ENCODE measurements at regions of chr3 and their contacts with region 1.

Region 1: GRCh38 chr3:30667280-30667651 is 60.9 kb downstream of the TGFBR2 start:
- DNase-seq: peak in 2 of 9 experiments; percentile 48 to 76
- ATAC-seq: peak; percentile 39
- H3K4me3 ChIP-seq: no peak overlapping the region
- H3K4me3 Mint-ChIP-seq: peak overlapping the region; percentile 45
- H3K27ac ChIP-seq: peak overlapping the region in 1 of 2 experiments; percentile 61
- H3K27ac Mint-ChIP-seq: peak overlapping the region; percentile 91
- H3K4me1 ChIP-seq: peaks cover 98% of the 10 kb centered on the region
- H3K4me1 Mint-ChIP-seq: peaks cover 96% of the 10 kb centered on the region
- H3K27me3 ChIP-seq: no peaks in the 10 kb centered on the region
- H3K27me3 Mint-ChIP-seq: no peaks in the 10 kb centered on the region
- CTCF ChIP-seq: no peak

Region 2: GRCh38 chr3:30437171-30437601 is 230.1 kb before region 1 on chr3:
- CTCF ChIA-PET with region 1: no interaction called
- POLR2A ChIA-PET with region 1: no interaction called
- intact Hi-C with region 1: no loop called
- DNase-seq: no peak
- ATAC-seq: no peak
- H3K4me3 ChIP-seq: no peak overlapping the region
- H3K4me3 Mint-ChIP-seq: no peak overlapping the region
- H3K27ac ChIP-seq: no peak overlapping the region
- H3K27ac Mint-ChIP-seq: no peak overlapping the region
- H3K4me1 ChIP-seq: peaks cover 22% of the 10 kb centered on the region
- H3K4me1 Mint-ChIP-seq: peaks cover 31% of the 10 kb centered on the region
- H3K27me3 ChIP-seq: no peaks in the 10 kb centered on the region
- H3K27me3 Mint-ChIP-seq: no peaks in the 10 kb centered on the region
- CTCF ChIP-seq: no peak

Region 3: DNA sequence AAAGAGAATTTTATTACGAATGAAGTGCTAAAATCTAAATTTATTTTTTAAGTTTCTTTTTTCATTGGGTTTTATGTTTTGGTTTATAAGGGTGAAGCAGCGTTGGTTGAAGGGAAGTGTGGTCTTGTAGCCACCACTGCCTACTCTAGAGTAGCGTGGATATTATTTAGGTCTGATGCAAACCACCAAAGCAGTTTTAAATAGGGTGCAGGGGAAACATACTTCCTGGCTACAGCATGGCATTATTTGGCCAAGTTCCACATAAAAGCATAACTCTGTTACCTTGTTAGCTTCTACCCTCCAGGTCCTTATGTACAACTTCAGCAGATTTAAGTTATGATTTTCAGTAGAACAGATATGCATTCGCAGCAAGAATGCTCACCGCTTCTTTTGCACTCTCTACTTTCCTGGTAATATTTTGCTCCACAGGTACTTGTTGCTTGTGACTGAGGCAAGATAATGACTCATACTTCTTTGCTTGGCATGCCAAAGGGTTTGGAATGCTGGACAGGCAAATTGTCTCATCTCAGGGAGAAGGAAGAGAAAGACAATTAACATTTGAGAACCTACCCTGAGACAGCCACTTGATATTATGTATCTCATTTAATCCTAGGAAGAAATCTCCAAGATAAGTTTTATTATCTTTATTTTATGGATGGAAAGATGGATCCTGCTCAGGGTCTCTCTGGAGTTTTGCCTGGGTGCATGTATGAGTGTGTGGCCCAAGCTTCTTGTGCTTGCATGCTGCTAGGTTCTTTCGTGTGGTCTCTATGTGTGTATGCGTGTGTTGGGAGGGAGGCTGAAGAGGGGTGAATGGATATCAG is 55.4 kb before region 1 on chr3:
- CTCF ChIA-PET with region 1: interaction called, 14 read pairs
- POLR2A ChIA-PET with region 1: interaction called, 13 read pairs
- intact Hi-C with region 1: loop called in 1 of 2 experiments (anchors 2 kb)
- DNase-seq: peak in 2 of 9 experiments; percentile 53 to 69
- ATAC-seq: peak; percentile 29
- H3K4me3 ChIP-seq: peak overlapping the region; percentile 89 to 94
- H3K4me3 Mint-ChIP-seq: peak overlapping the region; percentile 94
- H3K27ac ChIP-seq: peak overlapping the region; percentile 63 to 74
- H3K27ac Mint-ChIP-seq: peak overlapping the region; percentile 98
- H3K4me1 ChIP-seq: peaks cover 54% of the 10 kb centered on the region
- H3K4me1 Mint-ChIP-seq: peaks cover 68% of the 10 kb centered on the region
- H3K27me3 ChIP-seq: no peaks in the 10 kb centered on the region
- H3K27me3 Mint-ChIP-seq: no peaks in the 10 kb centered on the region
- CTCF ChIP-seq: no peak

Region 4: DNA sequence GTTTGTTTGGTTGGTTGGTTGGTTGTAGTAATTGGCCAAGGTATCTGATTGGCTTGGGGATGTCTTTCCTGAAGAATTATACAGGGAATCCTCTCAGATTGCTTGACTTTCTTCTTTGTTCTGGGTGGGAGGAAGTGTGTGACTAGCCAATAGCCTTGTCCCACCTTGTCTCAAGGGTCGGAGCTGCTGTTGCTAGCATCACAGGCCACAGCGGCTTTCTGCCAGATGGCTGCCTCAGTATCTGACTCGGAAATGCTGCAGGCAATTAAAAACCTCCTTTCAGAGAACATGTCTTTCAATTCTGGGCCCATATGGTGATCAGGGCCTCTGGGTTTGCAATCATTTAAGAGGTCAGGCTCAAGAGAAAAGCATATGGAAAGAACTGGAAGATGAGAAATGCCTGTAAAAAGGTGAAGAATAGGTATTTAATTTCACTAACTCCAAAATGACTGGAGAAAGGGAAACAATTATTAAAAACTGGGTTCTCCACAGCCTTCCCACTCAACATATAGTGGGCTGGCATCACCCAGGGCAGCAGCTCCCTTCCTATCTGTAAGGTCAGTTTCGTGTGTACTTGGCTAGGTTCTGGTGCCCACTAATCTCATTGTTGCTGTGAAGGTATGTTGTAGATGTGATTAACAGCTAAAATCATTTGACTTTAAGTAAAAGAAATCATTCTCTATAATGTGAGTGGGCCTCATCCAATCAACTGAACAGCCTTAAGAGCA is 28.4 kb before region 1 on chr3:
- CTCF ChIA-PET with region 1: interaction called, 4 read pairs
- POLR2A ChIA-PET with region 1: interaction called, 11 read pairs
- intact Hi-C with region 1: loop called in 1 of 2 experiments (anchors 5 kb)
- DNase-seq: no peak
- ATAC-seq: no peak
- H3K4me3 ChIP-seq: peak overlapping the region in 1 of 2 experiments; percentile 25
- H3K4me3 Mint-ChIP-seq: peak overlapping the region; percentile 55
- H3K27ac ChIP-seq: peak overlapping the region in 1 of 2 experiments; percentile 77
- H3K27ac Mint-ChIP-seq: peak overlapping the region; percentile 94
- H3K4me1 ChIP-seq: peaks cover 100% of the 10 kb centered on the region
- H3K4me1 Mint-ChIP-seq: peaks cover 97% of the 10 kb centered on the region
- H3K27me3 ChIP-seq: no peaks in the 10 kb centered on the region
- H3K27me3 Mint-ChIP-seq: no peaks in the 10 kb centered on the region
- CTCF ChIP-seq: no peak

Region 5: GRCh38 chr3:30681643-30682211 is 14.5 kb after region 1 on chr3:
- CTCF ChIA-PET with region 1: interaction called, 15 read pairs
- POLR2A ChIA-PET with region 1: interaction called, 19 read pairs
- intact Hi-C with region 1: loop called in 1 of 2 experiments (anchors 2 kb)
- DNase-seq: peak in 1 of 9 experiments; percentile 46
- ATAC-seq: peak; percentile 41
- H3K4me3 ChIP-seq: no peak overlapping the region
- H3K4me3 Mint-ChIP-seq: peak overlapping the region; percentile 23
- H3K27ac ChIP-seq: peak overlapping the region in 1 of 2 experiments; percentile 32
- H3K27ac Mint-ChIP-seq: peak overlapping the region; percentile 92
- H3K4me1 ChIP-seq: peaks cover 87% of the 10 kb centered on the region
- H3K4me1 Mint-ChIP-seq: peaks cover 95% of the 10 kb centered on the region
- H3K27me3 ChIP-seq: no peaks in the 10 kb centered on the region
- H3K27me3 Mint-ChIP-seq: no peaks in the 10 kb centered on the region
- CTCF ChIP-seq: no peak

Region 6: DNA sequence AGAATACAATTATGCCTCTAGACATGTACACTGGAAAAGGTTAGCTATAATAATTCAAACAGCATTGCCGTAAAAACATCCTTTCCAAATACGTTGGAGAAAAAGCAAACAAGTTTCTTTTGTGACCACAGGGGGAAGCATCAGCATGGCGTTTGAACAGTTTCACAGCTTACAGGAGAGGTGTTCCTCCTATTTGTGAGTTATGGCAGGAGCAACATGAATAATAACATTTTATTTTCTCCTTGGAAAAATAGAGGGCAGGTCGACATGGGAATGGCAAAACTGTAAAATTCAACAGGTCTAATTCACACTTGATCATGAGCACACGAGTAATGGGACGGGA is 266.9 kb after region 1 on chr3:
- CTCF ChIA-PET with region 1: no interaction called
- POLR2A ChIA-PET with region 1: no interaction called
- intact Hi-C with region 1: no loop called
- DNase-seq: peak in 2 of 9 experiments; percentile 22 to 36
- ATAC-seq: no peak
- H3K4me3 ChIP-seq: no peak overlapping the region
- H3K4me3 Mint-ChIP-seq: no peak overlapping the region
- H3K27ac ChIP-seq: no peak overlapping the region
- H3K27ac Mint-ChIP-seq: no peak overlapping the region
- H3K4me1 ChIP-seq: no peaks in the 10 kb centered on the region
- H3K4me1 Mint-ChIP-seq: peaks cover 8% of the 10 kb centered on the region
- H3K27me3 ChIP-seq: no peaks in the 10 kb centered on the region
- H3K27me3 Mint-ChIP-seq: no peaks in the 10 kb centered on the region
- CTCF ChIP-seq: no peak

Measured in CD8-positive, alpha-beta T cell (primary cell).